CD4-positive, alpha-beta T cell (primary cell): ENCODE measurements at regions of chr12 and their contacts with region 1.

Region 1: DNA sequence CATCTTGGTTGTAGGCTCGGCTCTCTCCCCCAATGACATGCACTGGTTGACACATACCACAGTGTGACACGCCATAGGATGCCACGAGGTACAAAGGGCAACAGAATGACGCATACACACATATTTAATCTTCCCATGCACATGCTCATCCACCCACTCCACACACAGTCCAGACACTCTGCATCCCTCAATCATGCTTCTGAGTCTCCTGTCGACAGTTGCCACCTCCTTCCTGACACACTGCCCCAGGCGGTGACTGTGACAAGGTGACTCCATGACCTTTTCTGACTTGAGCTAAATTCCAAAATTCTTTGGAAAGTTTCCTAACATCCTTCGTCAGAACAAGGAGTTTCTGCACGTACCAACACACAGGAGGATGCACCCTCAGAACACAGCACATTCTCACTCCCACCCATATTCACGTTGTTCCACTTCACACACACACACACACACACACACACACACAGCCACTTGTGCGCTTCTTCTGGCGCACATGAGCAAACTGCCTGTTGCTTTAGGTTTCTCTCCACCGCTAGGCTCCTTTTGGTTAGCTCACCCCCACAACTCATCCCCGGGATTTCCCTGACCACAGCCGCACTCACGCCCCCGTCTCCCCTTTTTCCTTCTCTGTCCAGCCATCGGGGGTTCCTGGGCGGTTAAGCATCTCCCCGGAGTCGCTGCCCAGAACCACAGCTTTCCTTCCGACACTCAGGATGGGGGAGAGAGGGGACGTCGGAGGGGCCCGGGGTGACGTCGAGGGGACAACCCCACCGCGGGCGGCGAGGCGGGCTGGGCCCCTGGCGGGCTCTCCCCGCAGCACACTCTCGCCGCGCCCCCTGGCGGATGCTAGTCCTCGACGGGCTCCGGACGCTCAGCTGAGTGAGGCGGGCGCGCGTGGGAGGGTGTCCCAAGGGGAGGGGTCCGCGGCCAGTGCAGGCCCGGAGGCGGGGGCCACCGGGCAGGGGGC is 524 bp upstream of the WNT1 start:
- DNase-seq: peak; percentile 67 to 93 (median 76)
- ATAC-seq: peak; percentile 47
- H3K4me3 ChIP-seq: no peak overlapping the region
- H3K4me3 Mint-ChIP-seq: peak overlapping the region; percentile 9
- H3K27ac ChIP-seq: no peak overlapping the region
- H3K27ac Mint-ChIP-seq: peak overlapping the region; percentile 16
- H3K4me1 ChIP-seq: peaks cover 64% of the 10 kb centered on the region
- H3K4me1 Mint-ChIP-seq: peaks cover 54% of the 10 kb centered on the region
- H3K27me3 ChIP-seq: peaks cover 33 to 45% of the 10 kb centered on the region in 2 experiments
- H3K27me3 Mint-ChIP-seq: peaks cover 70% of the 10 kb centered on the region
- CTCF ChIP-seq: peak; percentile 79

Region 2: GRCh38 chr12:48744251-48745008 is 233.2 kb before region 1 on chr12:
- CTCF ChIA-PET with region 1: no interaction called
- POLR2A ChIA-PET with region 1: no interaction called
- intact Hi-C with region 1: no loop called
- DNase-seq: no peak
- ATAC-seq: no peak
- H3K4me3 ChIP-seq: no peak overlapping the region
- H3K4me3 Mint-ChIP-seq: no peak overlapping the region
- H3K27ac ChIP-seq: no peak overlapping the region
- H3K27ac Mint-ChIP-seq: no peak overlapping the region
- H3K4me1 ChIP-seq: no peaks in the 10 kb centered on the region
- H3K4me1 Mint-ChIP-seq: no peaks in the 10 kb centered on the region
- H3K27me3 ChIP-seq: peaks cover 7 to 13% of the 10 kb centered on the region in 2 experiments
- H3K27me3 Mint-ChIP-seq: peaks cover 20% of the 10 kb centered on the region
- CTCF ChIP-seq: no peak

Region 3: GRCh38 chr12:48903982-48904411 is 73.6 kb before region 1 on chr12:
- CTCF ChIA-PET with region 1: interaction called, 15 read pairs
- POLR2A ChIA-PET with region 1: interaction called, 4 read pairs
- intact Hi-C with region 1: no loop called
- DNase-seq: peak; percentile 73 to 93 (median 82)
- ATAC-seq: peak; percentile 100
- H3K4me3 ChIP-seq: peak overlapping the region; percentile 37
- H3K4me3 Mint-ChIP-seq: peak overlapping the region; percentile 54
- H3K27ac ChIP-seq: no peak overlapping the region
- H3K27ac Mint-ChIP-seq: no peak overlapping the region
- H3K4me1 ChIP-seq: peaks cover 13% of the 10 kb centered on the region
- H3K4me1 Mint-ChIP-seq: peaks cover 4% of the 10 kb centered on the region
- H3K27me3 ChIP-seq: no peaks in the 10 kb centered on the region
- H3K27me3 Mint-ChIP-seq: peaks cover 5% of the 10 kb centered on the region
- CTCF ChIP-seq: peak; percentile 80

Region 4: GRCh38 chr12:48924617-48925303 is 52.8 kb before region 1 on chr12:
- CTCF ChIA-PET with region 1: interaction called, 35 read pairs
- POLR2A ChIA-PET with region 1: interaction called, 13 read pairs
- intact Hi-C with region 1: loop called (anchors 2 to 5 kb)
- DNase-seq: peak; percentile 60 to 91 (median 74)
- ATAC-seq: peak; percentile 84
- H3K4me3 ChIP-seq: peak overlapping the region; percentile 100
- H3K4me3 Mint-ChIP-seq: peak overlapping the region; percentile 99
- H3K27ac ChIP-seq: peak overlapping the region; percentile 87 to 91
- H3K27ac Mint-ChIP-seq: peak overlapping the region; percentile 86
- H3K4me1 ChIP-seq: peaks cover 52% of the 10 kb centered on the region
- H3K4me1 Mint-ChIP-seq: peaks cover 63% of the 10 kb centered on the region
- H3K27me3 ChIP-seq: no peaks in the 10 kb centered on the region
- H3K27me3 Mint-ChIP-seq: no peaks in the 10 kb centered on the region
- CTCF ChIP-seq: peak; percentile 75

Region 5: DNA sequence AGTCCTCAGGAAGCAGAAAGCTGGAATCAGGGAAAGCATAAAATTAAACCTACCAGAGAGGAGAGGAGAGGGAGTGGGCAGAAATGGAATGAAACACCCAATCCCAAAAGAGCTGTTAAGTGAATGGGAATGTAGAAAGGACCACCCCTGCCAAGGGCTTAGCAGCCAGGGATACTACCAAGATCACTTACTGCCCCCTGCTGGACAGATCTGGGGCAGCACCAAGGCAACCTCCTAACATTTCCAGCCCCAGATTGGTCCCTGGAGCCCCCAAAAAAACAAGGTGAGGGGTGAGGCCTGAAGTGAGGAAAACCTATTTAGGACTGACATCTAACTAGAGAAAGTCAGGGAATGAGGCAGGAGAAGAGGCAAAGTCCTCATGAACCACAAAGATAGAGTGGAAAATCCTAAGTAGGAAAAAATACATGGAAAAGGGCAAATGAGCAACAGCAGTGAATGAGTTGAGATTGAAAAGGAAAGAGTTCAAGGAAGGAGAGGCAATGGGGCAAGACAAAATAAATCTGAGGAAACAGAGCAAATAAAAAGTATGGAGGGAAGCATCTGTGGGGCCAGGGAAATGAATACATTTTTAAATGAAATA is 41.1 kb before region 1 on chr12:
- CTCF ChIA-PET with region 1: interaction called, 7 read pairs
- POLR2A ChIA-PET with region 1: no interaction called
- intact Hi-C with region 1: loop called in 1 of 2 experiments (anchors 5 kb)
- DNase-seq: peak; percentile 75 to 90 (median 84)
- ATAC-seq: peak; percentile 60
- H3K4me3 ChIP-seq: no peak overlapping the region
- H3K4me3 Mint-ChIP-seq: no peak overlapping the region
- H3K27ac ChIP-seq: no peak overlapping the region
- H3K27ac Mint-ChIP-seq: peak overlapping the region; percentile 32
- H3K4me1 ChIP-seq: peaks cover 55% of the 10 kb centered on the region
- H3K4me1 Mint-ChIP-seq: peaks cover 32% of the 10 kb centered on the region
- H3K27me3 ChIP-seq: no peaks in the 10 kb centered on the region
- H3K27me3 Mint-ChIP-seq: no peaks in the 10 kb centered on the region
- CTCF ChIP-seq: peak; percentile 94

Region 6: GRCh38 chr12:48957141-48958048 is 20.2 kb before region 1 on chr12 and contains the start of gene ARF3:
- CTCF ChIA-PET with region 1: interaction called, 31 read pairs
- POLR2A ChIA-PET with region 1: interaction called, 14 read pairs
- intact Hi-C with region 1: loop called in 1 of 2 experiments (anchors 2 kb)
- DNase-seq: peak; percentile 84 to 97 (median 92)
- ATAC-seq: peak; percentile 96
- H3K4me3 ChIP-seq: peak within 1 kb of the TSS; percentile 86
- H3K4me3 Mint-ChIP-seq: peak within 1 kb of the TSS; percentile 100
- H3K27ac ChIP-seq: peak within 1 kb of the TSS; percentile 35 to 51
- H3K27ac Mint-ChIP-seq: peak within 1 kb of the TSS; percentile 91
- H3K4me1 ChIP-seq: peaks cover 25% of the 10 kb centered on the region
- H3K4me1 Mint-ChIP-seq: peaks cover 54% of the 10 kb centered on the region
- H3K27me3 ChIP-seq: no peaks in the 10 kb centered on the region
- H3K27me3 Mint-ChIP-seq: peaks cover 6% of the 10 kb centered on the region
- CTCF ChIP-seq: no peak
- total RNA-seq, gene ARF3: 32.0 to 34.6 TPM

Region 7: DNA sequence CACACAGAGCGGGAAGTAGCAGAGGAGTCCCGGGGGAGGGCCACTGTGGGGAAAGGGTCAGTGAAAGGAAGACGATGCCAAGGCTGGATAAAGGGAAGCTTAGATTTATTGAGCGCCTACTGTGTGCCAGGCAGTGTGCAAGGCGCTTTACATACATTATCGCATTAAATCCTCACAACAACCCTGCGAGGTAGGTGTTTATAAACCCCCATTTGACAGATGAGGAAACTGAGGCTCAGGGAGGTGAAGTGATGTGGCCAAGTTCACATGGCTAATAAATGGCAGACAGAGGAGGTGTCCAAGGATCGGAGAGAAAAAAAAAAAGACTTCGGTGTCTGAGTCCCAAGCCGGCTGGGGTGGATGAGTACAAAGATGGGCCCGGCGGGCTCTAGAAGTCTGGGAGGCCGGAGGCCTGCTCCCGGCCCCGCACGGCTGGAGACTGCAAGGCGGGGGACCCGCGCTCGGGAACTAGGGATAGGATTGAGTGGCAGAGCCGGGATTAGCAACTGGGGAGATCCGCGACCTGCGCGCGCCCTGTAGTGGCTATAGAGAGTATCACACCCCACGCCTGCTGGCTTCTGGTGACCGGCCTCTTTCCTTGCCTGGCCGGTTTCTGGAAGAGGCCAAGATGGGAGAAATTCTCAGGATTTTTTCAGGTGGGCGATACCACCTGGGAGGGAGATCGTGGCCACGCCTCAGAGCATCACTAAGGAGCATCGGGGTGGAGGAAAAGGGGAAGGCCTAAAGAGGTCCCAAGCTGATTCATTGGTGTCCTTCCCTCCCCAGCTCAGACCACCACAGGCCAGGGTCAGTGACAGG is 17.7 kb after region 1 on chr12:
- CTCF ChIA-PET with region 1: interaction called, 25 read pairs
- POLR2A ChIA-PET with region 1: interaction called, 29 read pairs
- intact Hi-C with region 1: no loop called
- DNase-seq: peak in 7 of 14 experiments; percentile 40 to 73 (median 56)
- ATAC-seq: peak; percentile 28
- H3K4me3 ChIP-seq: no peak overlapping the region
- H3K4me3 Mint-ChIP-seq: peak overlapping the region; percentile 61
- H3K27ac ChIP-seq: no peak overlapping the region
- H3K27ac Mint-ChIP-seq: no peak overlapping the region
- H3K4me1 ChIP-seq: peaks cover 46% of the 10 kb centered on the region
- H3K4me1 Mint-ChIP-seq: peaks cover 44% of the 10 kb centered on the region
- H3K27me3 ChIP-seq: peaks cover 53 to 56% of the 10 kb centered on the region in 2 experiments
- H3K27me3 Mint-ChIP-seq: peaks cover 73% of the 10 kb centered on the region
- CTCF ChIP-seq: peak; percentile 83